Breast epithelium (tissue), 4 donors: ENCODE measurements at regions of chr4 and their contacts with region 1.

Region 1: GRCh38 chr4:134117392-134118184 is 84.0 kb downstream of the PABPC4L start:
- DNase-seq: no peak
- H3K4me3 ChIP-seq: no peak overlapping the region
- H3K27ac ChIP-seq: no peak overlapping the region
- H3K4me1 ChIP-seq: no peaks in the 10 kb centered on the region
- H3K27me3 ChIP-seq: no peaks in the 10 kb centered on the region
- CTCF ChIP-seq: no peak
- POLR2A ChIP-seq: no peak

Region 2: DNA sequence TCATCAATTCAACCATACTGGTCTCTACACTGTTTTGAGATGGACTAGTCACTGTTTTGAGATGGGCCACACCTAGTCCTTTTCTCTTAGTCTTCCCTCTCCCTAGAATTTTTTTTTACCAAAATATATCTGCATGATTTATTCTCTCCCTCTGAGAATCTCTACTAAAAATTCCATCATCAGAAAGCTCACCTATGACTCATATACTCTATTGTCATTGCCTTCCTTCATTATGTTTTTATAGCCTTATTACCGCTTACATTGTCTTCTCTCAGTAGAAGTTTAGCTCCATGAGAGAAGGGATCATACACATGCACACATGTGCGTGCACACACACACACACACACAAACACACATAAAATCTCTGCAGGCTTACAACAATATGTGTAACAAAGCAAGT is 664.9 kb before region 1 on chr4:
- intact Hi-C with region 1: no loop called
- DNase-seq: no peak
- H3K4me3 ChIP-seq: no peak overlapping the region
- H3K27ac ChIP-seq: no peak overlapping the region
- H3K4me1 ChIP-seq: no peaks in the 10 kb centered on the region
- H3K27me3 ChIP-seq: no peaks in the 10 kb centered on the region
- CTCF ChIP-seq: no peak
- POLR2A ChIP-seq: no peak

Region 3: GRCh38 chr4:133960975-133961374 is 156.6 kb before region 1 on chr4:
- intact Hi-C with region 1: loop called (anchors 5 kb)
- DNase-seq: no peak
- H3K4me3 ChIP-seq: no peak overlapping the region
- H3K27ac ChIP-seq: no peak overlapping the region
- H3K4me1 ChIP-seq: no peaks in the 10 kb centered on the region
- H3K27me3 ChIP-seq: no peaks in the 10 kb centered on the region
- CTCF ChIP-seq: no peak
- POLR2A ChIP-seq: no peak

Region 4: GRCh38 chr4:134382478-134383227 is 265.1 kb after region 1 on chr4:
- intact Hi-C with region 1: no loop called
- DNase-seq: no peak
- H3K4me3 ChIP-seq: no peak overlapping the region
- H3K27ac ChIP-seq: no peak overlapping the region
- H3K4me1 ChIP-seq: no peaks in the 10 kb centered on the region
- H3K27me3 ChIP-seq: no peaks in the 10 kb centered on the region
- CTCF ChIP-seq: no peak
- POLR2A ChIP-seq: no peak